ENCODE measurements at regions of chr19 and their contacts with region 1.

Region 1: GRCh38 chr19:7605490-7606222 is 10.0 kb downstream of the CAMSAP3 start:
- DNase-seq: peak; percentile 78
- H3K4me3 ChIP-seq: no peak overlapping the region
- H3K27ac ChIP-seq: no peak overlapping the region; a peak in 1 of 4 replicates
- H3K4me1 ChIP-seq: peaks cover 0 to 8% of the 10 kb centered on the region in 2 experiments; a peak in 1 of 4 replicates
- H3K27me3 ChIP-seq: no peaks in the 10 kb centered on the region
- CTCF ChIP-seq: no peak
- EP300 ChIP-seq: no peak
- RAD21 ChIP-seq: no peak

Region 2: DNA sequence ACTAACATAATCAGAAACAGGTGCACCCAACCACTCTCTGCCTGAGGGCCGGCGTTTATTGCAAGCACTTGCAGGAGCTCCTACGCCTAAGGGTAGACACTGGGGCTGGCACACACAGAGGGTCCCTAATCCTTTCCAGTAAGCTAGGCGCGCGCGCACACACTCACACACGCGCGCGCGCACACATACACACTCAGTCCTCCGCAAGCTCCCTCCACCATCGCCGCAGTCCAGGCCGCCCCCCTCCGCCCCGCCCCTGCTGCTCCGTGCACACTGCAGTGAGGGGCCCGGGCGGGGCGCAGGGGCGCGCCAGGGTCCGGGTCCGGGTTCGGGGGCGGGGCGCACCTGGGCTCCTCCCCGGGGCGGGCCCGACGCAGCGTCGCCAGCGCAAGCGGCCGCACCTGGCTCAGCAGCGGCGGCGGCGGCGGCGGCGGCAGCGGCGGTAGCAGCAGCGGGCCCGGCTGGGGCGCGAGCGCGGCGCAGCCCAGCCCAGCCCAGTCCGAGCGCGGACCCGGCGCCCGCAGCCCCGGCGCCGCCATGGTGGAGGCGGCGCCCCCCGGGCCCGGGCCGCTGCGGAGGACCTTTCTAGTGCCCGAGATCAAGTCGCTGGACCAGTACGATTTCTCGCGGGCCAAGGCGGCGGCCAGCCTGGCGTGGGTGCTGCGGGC is 10.1 kb before region 1 on chr19 and contains the start of gene CAMSAP3:
- CTCF ChIA-PET with region 1: interaction called, 12 read pairs
- POLR2A ChIA-PET with region 1: interaction called, 9 read pairs
- DNase-seq: peak; percentile 90
- H3K4me3 ChIP-seq: peak within 1 kb of the TSS; percentile 47 to 48; a peak in 3 of 4 replicates
- H3K27ac ChIP-seq: no peak within 1 kb of the TSS; a peak in 1 of 4 replicates
- H3K4me1 ChIP-seq: peaks cover 0 to 8% of the 10 kb centered on the region in 2 experiments; a peak in 1 of 4 replicates
- H3K27me3 ChIP-seq: peaks cover 23% of the 10 kb centered on the region
- CTCF ChIP-seq: no peak
- EP300 ChIP-seq: peak in 1 of 2 experiments; percentile 34; a peak in 1 of 4 replicates
- RAD21 ChIP-seq: no peak; the same call in 1 of the 2 replicates
- polyA plus RNA-seq, gene CAMSAP3: 0.05 and 0.08 TPM in 2 replicates

Measured in SK-N-SH (cell line).